H1 (cell line): ENCODE measurements at regions of chr14 and their contacts with region 1.

Region 1: DNA sequence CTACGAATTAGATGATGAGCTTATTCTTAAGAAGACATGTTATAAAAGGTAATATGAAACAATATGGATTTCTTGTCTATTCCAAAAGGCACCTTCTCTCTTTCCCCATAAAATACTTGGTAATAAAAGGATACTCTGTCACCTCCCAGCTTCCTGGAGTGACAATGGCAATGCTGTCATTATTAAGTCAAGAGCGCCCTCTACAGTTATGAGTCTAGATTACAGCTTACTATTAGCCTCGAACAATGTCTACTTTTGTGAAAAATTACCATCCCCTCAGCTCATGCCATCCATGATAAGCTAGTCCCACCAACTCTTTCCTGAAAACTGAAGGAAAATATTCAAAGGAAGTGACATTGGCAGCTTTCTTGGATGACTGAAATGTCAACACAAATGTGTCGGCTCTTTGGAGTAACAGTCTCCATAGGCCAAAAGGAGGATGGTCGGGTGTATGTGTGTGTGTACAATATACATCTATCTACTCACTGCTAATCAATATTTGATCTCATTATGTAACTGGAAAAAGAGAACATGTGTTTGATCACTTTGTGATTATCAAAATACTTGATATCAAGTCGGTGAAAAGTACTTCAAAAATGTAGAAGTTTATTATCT is 48.7 kb upstream of the CDKN3 start:
- DNase-seq: no peak
- H3K4me3 ChIP-seq: no peak overlapping the region
- H3K27ac ChIP-seq: no peak overlapping the region
- H3K4me1 ChIP-seq: peaks cover 0 to 9% (median 6%) of the 10 kb centered on the region in 4 experiments; a peak in 6 of 7 replicates
- H3K27me3 ChIP-seq: no peaks in the 10 kb centered on the region
- CTCF ChIP-seq: peak in 2 of 3 experiments; percentile 76 to 84; a peak in 3 of 4 replicates
- EP300 ChIP-seq: no peak
- POLR2A ChIP-seq: no peak
- RAD21 ChIP-seq: peak; percentile 95 to 97

Region 2: DNA sequence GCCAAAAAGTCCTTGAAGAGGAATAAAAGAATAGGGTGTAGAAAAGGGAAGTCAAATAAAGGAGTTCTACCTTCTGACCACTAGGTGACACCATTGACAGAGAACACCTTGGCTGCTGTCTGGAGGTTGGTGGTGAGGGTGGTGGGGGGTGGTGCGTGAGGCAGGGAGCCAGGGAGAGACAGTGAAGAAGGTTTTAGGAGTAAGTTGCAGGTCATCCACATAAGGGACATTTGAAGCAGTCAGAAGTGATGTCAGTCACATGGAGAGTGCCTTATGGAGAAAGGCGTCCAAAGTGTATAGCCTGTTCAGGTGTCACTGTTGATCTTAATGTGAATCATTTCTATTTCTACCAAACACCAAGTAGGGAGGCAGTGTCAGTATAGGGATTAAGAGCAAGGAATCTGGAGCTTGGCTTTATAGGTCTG is 915.7 kb before region 1 on chr14:
- CTCF ChIA-PET with region 1: interaction called, 20 read pairs
- POLR2A ChIA-PET with region 1: no interaction called
- DNase-seq: peak; percentile 21 to 51
- H3K4me3 ChIP-seq: no peak overlapping the region
- H3K27ac ChIP-seq: no peak overlapping the region
- H3K4me1 ChIP-seq: peaks cover 0 to 3% (median 1%) of the 10 kb centered on the region in 4 experiments; a peak in 2 of 7 replicates
- H3K27me3 ChIP-seq: no peaks in the 10 kb centered on the region
- CTCF ChIP-seq: peak; percentile 55 to 84 (median 65)
- EP300 ChIP-seq: no peak
- POLR2A ChIP-seq: no peak
- RAD21 ChIP-seq: peak; percentile 91 to 93

Region 3: DNA sequence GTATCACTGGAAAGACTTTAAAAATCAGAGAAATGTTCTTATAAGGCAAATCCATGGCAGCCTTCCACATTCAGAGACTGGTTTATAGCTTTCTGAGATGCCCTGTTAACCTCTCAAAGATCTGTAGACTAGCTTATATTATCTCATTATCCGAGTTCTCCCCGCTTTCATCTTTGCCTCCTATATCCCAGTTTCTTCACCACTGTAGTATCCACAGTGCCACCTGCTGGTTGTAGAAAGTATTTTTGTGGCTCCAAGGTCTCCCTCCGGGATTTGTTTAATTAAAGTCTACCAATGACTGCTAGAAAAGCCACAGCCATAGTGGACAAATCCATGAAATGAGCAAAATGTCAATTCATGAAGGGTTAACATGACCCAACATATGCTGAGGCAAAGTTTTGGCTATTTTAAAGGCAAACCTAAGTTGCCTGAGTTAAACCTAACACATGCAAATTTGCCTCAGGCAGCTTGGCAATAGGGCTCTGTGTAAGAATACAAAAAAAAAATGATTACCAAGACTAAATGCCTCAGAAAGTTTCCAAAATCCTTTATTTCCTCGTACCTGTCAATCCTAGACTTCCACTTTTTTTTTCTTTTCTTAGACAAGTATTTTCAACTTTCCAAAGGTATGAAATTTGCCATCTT is 172.7 kb before region 1 on chr14:
- CTCF ChIA-PET with region 1: interaction called, 18 read pairs
- POLR2A ChIA-PET with region 1: no interaction called
- DNase-seq: peak; percentile 23 to 86
- H3K4me3 ChIP-seq: no peak overlapping the region
- H3K27ac ChIP-seq: no peak overlapping the region
- H3K4me1 ChIP-seq: no peaks in the 10 kb centered on the region
- H3K27me3 ChIP-seq: no peaks in the 10 kb centered on the region
- CTCF ChIP-seq: peak in 2 of 3 experiments; percentile 70 to 74; a peak in 3 of 4 replicates
- EP300 ChIP-seq: no peak
- POLR2A ChIP-seq: no peak
- RAD21 ChIP-seq: peak; percentile 86 to 92

Region 4: GRCh38 chr14:54220071-54220703 is 127.9 kb before region 1 on chr14:
- CTCF ChIA-PET with region 1: interaction called, 17 read pairs
- POLR2A ChIA-PET with region 1: interaction called, 3 read pairs
- DNase-seq: peak in 1 of 2 experiments; percentile 63
- H3K4me3 ChIP-seq: peak overlapping the region; percentile 35 to 63 (median 50); a peak in 7 of 8 replicates
- H3K27ac ChIP-seq: no peak overlapping the region
- H3K4me1 ChIP-seq: peaks cover 0 to 13% (median 12%) of the 10 kb centered on the region in 4 experiments; a peak in 6 of 7 replicates
- H3K27me3 ChIP-seq: peaks cover 16 to 39% (median 31%) of the 10 kb centered on the region in 4 experiments
- CTCF ChIP-seq: peak in 1 of 3 experiments; percentile 1; a peak in 1 of 4 replicates
- EP300 ChIP-seq: no peak
- POLR2A ChIP-seq: no peak
- RAD21 ChIP-seq: no peak

Region 5: DNA sequence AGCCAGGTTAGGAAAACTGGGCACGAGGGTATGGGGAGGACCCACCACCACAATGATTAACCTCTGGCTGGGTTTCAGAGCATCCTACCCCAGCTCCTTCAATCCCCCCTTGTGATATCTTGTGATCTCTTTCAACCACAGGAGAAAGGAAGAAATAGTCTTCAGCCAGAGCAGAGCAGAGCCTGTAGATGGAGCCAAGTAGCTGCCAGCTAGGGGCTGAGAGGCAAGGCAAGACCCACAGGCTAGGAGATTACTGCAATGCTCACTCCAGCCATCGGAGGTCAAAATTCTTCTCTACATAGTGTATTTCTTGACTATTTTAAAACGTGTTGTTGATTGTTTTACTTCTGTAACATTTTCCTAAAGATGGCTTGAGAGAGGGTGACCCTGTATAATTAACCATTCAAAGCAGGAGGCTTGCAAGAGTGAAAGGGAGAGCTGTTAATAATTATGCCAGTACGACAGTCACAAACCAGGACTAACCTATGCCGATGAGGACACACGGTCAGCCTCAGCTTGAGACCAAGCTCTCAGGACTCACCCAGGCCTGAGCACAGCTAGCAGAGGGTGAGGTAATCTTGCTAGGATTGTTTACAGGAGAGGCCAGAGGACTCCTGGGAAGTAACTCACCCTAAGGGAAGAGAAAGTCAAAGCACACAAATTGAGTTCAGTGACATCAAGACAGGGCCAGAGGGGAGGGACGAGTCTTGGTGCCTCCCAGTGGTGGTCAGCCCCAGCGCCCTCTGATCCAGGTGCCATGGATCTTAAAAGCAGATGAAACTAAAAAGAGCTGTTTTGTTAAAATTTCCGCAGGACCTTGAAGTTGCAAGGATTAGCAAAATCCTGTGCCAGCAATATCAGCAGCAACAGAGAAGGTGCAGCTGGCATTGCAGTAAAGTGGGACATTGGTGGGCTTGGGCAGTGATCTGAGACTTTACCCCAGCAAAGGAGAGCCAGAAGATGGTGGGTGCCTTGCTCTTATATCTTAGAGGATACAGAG is 18.9 kb after region 1 on chr14:
- CTCF ChIA-PET with region 1: interaction called, 17 read pairs
- POLR2A ChIA-PET with region 1: interaction called, 9 read pairs
- DNase-seq: peak in 1 of 2 experiments; percentile 51
- H3K4me3 ChIP-seq: no peak overlapping the region
- H3K27ac ChIP-seq: no peak overlapping the region
- H3K4me1 ChIP-seq: peaks cover 16 to 25% (median 21%) of the 10 kb centered on the region in 4 experiments; a peak in 6 of 7 replicates
- H3K27me3 ChIP-seq: no peaks in the 10 kb centered on the region; a peak in 2 of 7 replicates
- CTCF ChIP-seq: peak; percentile 71 to 98 (median 93)
- EP300 ChIP-seq: no peak
- POLR2A ChIP-seq: peak in 1 of 2 experiments; percentile 63; a peak in 2 of 3 replicates
- RAD21 ChIP-seq: peak; percentile 85 to 90

Region 6: GRCh38 chr14:54396493-54397335 is 48.6 kb after region 1 on chr14 and contains the start of gene CDKN3:
- CTCF ChIA-PET with region 1: interaction called, 18 read pairs
- POLR2A ChIA-PET with region 1: no interaction called
- DNase-seq: peak; percentile 94 to 97
- H3K4me3 ChIP-seq: peak within 1 kb of the TSS; percentile 64 to 84 (median 79)
- H3K27ac ChIP-seq: peak within 1 kb of the TSS; percentile 41; the same call in 1 of the 2 replicates
- H3K4me1 ChIP-seq: peaks cover 0 to 3% (median 1%) of the 10 kb centered on the region in 4 experiments; a peak in 2 of 7 replicates
- H3K27me3 ChIP-seq: peaks cover 0 to 7% (median 3%) of the 10 kb centered on the region in 4 experiments; a peak in 3 of 7 replicates
- CTCF ChIP-seq: peak; percentile 12 to 31 (median 24); a peak in 3 of 4 replicates
- EP300 ChIP-seq: no peak
- POLR2A ChIP-seq: peak; percentile 85 to 88
- RAD21 ChIP-seq: 0 out of 4 replicates have a peak, but pooled peaks of 1 of the 2 experiments have one; percentile 1
- total RNA-seq, gene CDKN3: 41.5 and 48.3 TPM in 2 replicates